A549 (cell line): ENCODE measurements at regions of chr20 and their contacts with region 1.

Region 1: DNA sequence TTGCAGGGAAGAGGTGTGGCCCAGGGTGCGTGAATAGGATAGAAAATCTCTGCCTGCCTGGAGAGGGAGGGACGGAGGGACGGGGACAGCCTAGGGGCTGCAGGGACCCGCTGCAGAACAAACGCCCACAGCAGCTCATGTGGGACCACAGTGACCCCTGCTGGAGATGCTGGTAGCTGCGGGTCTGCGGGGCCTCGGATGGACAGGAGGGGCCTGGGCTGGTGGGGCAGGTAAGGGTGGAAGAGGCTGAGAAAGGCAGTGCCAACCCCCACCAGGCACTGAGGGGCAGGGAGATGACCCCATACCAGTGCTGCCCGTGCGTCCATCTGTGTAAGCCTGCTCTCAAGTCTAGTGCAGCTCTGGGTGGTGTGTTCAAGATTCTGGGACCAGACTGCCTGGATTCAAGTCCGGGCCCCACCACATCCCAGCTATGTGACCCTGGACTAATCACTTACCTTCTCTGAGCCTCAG is 39.4 kb downstream of the KIAA1755 start:
- DNase-seq: peak; percentile 73 to 91
- ATAC-seq: peak; percentile 72 to 81
- H3K4me3 ChIP-seq: no peak overlapping the region
- H3K27ac ChIP-seq: peak overlapping the region; percentile 90 to 98
- H3K4me1 ChIP-seq: peaks cover 51% of the 10 kb centered on the region
- CTCF ChIP-seq: peak; percentile 94
- EP300 ChIP-seq: no peak
- POLR2A ChIP-seq: no peak
- RAD21 ChIP-seq: peak; percentile 97 to 99

Region 2: DNA sequence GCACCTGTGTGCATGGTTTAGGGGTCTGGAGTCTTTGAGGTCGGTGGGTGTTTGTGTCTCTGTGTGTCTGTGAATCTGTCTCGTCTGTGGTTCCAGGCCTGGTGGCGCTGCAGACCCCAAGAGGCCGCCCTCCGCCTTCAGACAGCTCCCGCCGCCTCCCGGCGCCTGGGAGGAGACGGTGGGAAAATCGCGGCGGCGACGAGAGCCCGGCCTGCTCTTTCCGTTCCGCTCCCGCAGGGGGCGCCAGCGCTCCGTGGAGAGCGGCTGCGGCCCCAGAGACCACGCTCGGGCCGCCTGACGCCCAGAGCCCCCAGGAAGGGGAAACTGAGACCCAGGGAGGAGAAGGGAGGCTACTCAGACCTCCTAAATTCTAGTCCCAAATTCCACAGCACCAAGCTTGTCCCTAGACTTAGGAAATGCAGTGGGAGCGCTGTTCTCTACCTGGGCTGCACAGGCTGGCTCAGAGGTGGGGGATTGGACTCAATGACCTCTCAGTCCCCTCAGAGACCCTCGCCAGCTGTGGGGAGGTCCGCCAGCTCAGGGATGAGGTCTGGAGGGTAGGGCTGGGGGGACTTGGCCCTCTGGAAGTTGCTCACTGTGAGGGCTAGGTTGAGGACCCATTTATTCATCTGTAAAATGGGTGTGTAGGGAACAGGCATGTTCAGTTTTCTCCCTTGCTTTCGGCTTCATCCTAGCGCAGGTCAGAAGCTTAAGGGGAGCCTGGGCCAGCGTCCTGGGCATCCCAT is 656.6 kb before region 1 on chr20:
- CTCF ChIA-PET with region 1: interaction called, 51 read pairs
- POLR2A ChIA-PET with region 1: no interaction called
- DNase-seq: peak; percentile 19 to 46
- ATAC-seq: peak; percentile 80 to 91
- H3K4me3 ChIP-seq: no peak overlapping the region
- H3K27ac ChIP-seq: 0 out of 6 replicates have a peak overlapping the region, but pooled peaks of 1 of the 2 experiments have one; percentile 37
- H3K4me1 ChIP-seq: peaks cover 5% of the 10 kb centered on the region; the same call in 1 of the 3 replicates
- CTCF ChIP-seq: peak; percentile 96
- EP300 ChIP-seq: no peak
- POLR2A ChIP-seq: no peak
- RAD21 ChIP-seq: peak; percentile 90 to 97

Region 3: DNA sequence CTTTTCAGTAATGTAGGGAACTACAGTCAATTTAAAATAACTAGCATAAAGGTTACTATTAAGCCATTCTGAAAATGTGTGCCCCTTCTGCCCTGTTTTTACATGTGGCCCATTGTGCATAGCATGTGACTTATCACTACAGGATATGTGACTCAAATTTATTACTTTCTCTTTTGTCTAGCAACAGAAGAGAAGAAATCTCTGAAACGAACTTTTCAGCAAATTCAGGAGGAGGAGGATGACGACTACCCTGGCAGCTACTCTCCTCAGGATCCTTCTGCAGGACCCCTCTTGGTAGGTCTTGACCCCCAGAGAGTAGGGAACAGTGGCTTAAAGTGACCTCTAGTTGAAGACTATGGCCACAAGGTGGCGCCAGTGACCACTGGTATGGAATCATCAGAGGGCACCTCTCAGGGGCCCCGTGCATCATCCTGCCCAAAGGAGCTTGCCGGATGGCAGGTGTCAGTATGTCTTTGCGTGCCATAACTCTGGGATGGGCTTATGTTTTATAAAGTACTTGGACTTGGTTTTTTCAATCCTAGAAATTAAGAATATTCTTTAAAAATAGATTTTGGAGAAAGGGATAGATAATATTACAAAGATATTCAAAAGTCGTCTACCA is 163.7 kb before region 1 on chr20:
- CTCF ChIA-PET with region 1: interaction called, 356 read pairs
- POLR2A ChIA-PET with region 1: interaction called, 6 read pairs
- DNase-seq: peak; percentile 81 to 82
- ATAC-seq: peak; percentile 94 to 99
- H3K4me3 ChIP-seq: no peak overlapping the region
- H3K27ac ChIP-seq: peak overlapping the region; percentile 29 to 47; a peak in 1 of 6 replicates
- H3K4me1 ChIP-seq: peaks cover 26% of the 10 kb centered on the region
- CTCF ChIP-seq: peak; percentile 96
- EP300 ChIP-seq: no peak
- POLR2A ChIP-seq: no peak
- RAD21 ChIP-seq: peak; percentile 96 to 98

Region 4: GRCh38 chr20:38113401-38114325 is 107.5 kb before region 1 on chr20:
- CTCF ChIA-PET with region 1: interaction called, 49 read pairs
- POLR2A ChIA-PET with region 1: no interaction called
- DNase-seq: peak in 1 of 2 experiments; percentile 67
- ATAC-seq: peak in 1 of 2 experiments; percentile 61; a peak in 3 of 6 replicates
- H3K4me3 ChIP-seq: no peak overlapping the region
- H3K27ac ChIP-seq: peak overlapping the region; percentile 80 to 88
- H3K4me1 ChIP-seq: peaks cover 60% of the 10 kb centered on the region
- CTCF ChIP-seq: peak; percentile 35; the same call in 2 of the 3 replicates
- EP300 ChIP-seq: no peak
- POLR2A ChIP-seq: no peak
- RAD21 ChIP-seq: peak; percentile 43 to 62

Region 5: GRCh38 chr20:38165089-38165989 is 55.8 kb before region 1 on chr20 and contains the start of gene TGM2:
- CTCF ChIA-PET with region 1: interaction called, 818 read pairs
- POLR2A ChIA-PET with region 1: interaction called, 8 read pairs
- DNase-seq: peak; percentile 73 to 86
- ATAC-seq: peak; percentile 68 to 88
- H3K4me3 ChIP-seq: peak within 1 kb of the TSS; percentile 62
- H3K27ac ChIP-seq: peak within 1 kb of the TSS; percentile 91 to 93
- H3K4me1 ChIP-seq: peaks cover 84% of the 10 kb centered on the region
- CTCF ChIP-seq: peak; percentile 88
- EP300 ChIP-seq: no peak
- POLR2A ChIP-seq: peak; percentile 89
- RAD21 ChIP-seq: peak; percentile 80 to 93
- polyA plus RNA-seq, gene TGM2: 173 TPM in 2 replicates

Region 6: DNA sequence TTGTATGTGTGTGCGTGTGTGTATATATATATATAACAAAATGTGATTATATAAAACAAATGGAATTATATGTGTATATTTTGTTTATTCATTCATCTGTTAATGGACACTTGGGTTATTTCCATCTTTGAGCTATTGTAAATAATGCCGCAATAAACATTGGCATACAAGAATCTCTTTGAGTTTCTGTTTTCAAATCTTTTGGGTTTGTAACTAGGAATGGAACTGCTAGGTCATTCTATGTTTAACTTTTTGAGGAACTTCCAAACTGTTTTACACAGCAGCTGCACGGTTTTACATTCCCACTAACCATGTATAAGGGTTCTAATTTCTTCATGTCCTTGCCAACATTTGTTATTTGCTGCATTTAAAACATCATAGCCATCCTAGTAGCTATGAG is 16.2 kb before region 1 on chr20:
- CTCF ChIA-PET with region 1: interaction called, 350 read pairs
- POLR2A ChIA-PET with region 1: no interaction called
- DNase-seq: no peak
- ATAC-seq: no peak
- H3K4me3 ChIP-seq: no peak overlapping the region
- H3K27ac ChIP-seq: no peak overlapping the region
- H3K4me1 ChIP-seq: peaks cover 21% of the 10 kb centered on the region
- CTCF ChIP-seq: no peak
- EP300 ChIP-seq: no peak
- POLR2A ChIP-seq: no peak
- RAD21 ChIP-seq: no peak

Region 7: DNA sequence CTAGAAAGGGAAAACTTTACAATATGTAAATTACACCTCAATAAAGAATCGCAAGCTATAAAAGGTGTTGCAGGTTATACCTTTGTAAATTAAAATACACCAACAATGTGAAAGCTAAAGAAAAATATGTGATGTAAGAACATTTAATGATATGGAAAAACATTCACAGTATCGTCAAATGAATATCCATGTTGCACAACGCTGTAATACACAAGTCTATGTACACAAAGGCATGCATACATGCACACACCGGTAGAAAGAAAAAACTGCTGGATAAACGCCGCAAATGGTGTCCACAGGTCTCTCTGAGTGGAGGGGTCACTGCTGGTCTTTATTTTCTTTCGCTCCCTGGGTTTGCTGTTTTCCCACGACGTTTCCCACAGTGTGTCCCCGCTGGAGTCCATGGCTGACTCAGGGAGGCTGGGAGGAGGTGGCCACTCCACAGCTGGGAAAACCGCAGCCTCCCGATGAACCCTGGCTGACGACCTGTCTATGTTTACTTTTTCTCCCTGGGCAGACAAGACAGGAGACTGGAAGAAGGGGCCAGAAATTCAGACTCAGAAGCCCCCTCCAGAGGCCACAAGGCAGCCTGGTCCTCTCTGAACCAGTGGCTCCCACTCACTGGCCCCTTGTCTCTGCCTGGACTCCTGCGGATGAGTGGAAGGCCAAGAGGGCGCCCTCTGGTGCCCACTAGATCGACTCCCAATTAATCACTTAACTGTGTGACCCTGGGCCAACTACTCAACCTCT is 69.9 kb after region 1 on chr20:
- CTCF ChIA-PET with region 1: interaction called, 22 read pairs
- POLR2A ChIA-PET with region 1: no interaction called
- DNase-seq: peak; percentile 82 to 87
- ATAC-seq: peak; percentile 93 to 96
- H3K4me3 ChIP-seq: peak overlapping the region; percentile 45
- H3K27ac ChIP-seq: peak overlapping the region; percentile 52 to 71
- H3K4me1 ChIP-seq: no peaks in the 10 kb centered on the region
- CTCF ChIP-seq: peak; percentile 89
- EP300 ChIP-seq: 0 out of 5 replicates have a peak, but pooled peaks of 1 of the 2 experiments have one; percentile 12
- POLR2A ChIP-seq: no peak
- RAD21 ChIP-seq: peak; percentile 54 to 62

Region 8: GRCh38 chr20:38523697-38524096 is 302.5 kb after region 1 on chr20:
- CTCF ChIA-PET with region 1: no interaction called
- POLR2A ChIA-PET with region 1: no interaction called
- DNase-seq: peak in 1 of 2 experiments; percentile 6
- ATAC-seq: peak; percentile 45 to 47; a peak in 3 of 6 replicates
- H3K4me3 ChIP-seq: no peak overlapping the region
- H3K27ac ChIP-seq: no peak overlapping the region
- H3K4me1 ChIP-seq: peaks cover 12% of the 10 kb centered on the region
- CTCF ChIP-seq: no peak
- EP300 ChIP-seq: no peak
- POLR2A ChIP-seq: no peak
- RAD21 ChIP-seq: no peak